ENCODE measurements at regions of chr2 and their contacts with region 1.

Region 1: GRCh38 chr2:129781749-129782632 is 197.5 kb upstream of the RAB6C start:
- DNase-seq: peak in 1 of 2 donors; percentile 19
- H3K4me3 ChIP-seq: no peak overlapping the region
- H3K27ac ChIP-seq: no peak overlapping the region
- H3K4me1 ChIP-seq: no peaks in the 10 kb centered on the region
- H3K27me3 ChIP-seq: peaks cover 0 to 15% of the 10 kb centered on the region in 2 donors
- CTCF ChIP-seq: no peak
- POLR2A ChIP-seq: no peak

Region 2: DNA sequence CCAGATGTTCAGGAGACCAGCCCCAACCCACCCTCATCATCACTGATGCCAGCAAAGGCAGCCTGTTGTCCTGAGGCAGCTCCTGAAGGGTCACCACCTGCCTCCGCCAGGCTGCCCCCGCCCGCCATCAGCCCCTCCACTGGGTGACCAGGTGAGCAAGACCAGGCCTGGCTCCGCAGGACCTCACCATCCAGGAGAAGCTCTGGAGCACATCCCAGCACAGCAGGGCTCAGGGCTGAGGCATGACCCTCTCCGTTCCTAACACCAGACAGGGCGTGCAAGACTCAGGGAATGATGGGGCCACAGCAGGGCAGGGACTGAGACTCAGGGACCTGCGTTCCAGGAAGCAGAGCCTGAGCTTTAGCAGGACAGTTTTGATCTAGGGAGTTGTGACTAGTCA is 21.3 kb before region 1 on chr2:
- intact Hi-C with region 1: loop called (anchors 1 kb)
- DNase-seq: no peak
- H3K4me3 ChIP-seq: no peak overlapping the region
- H3K27ac ChIP-seq: no peak overlapping the region
- H3K4me1 ChIP-seq: no peaks in the 10 kb centered on the region
- H3K27me3 ChIP-seq: peaks cover 0 to 5% of the 10 kb centered on the region in 2 donors
- CTCF ChIP-seq: no peak
- POLR2A ChIP-seq: no peak

Measured in breast epithelium (tissue), 4 donors.